Sigmoid colon (tissue), 7 donors: ENCODE measurements at regions of chr14 and their contacts with region 1.

Region 1: DNA sequence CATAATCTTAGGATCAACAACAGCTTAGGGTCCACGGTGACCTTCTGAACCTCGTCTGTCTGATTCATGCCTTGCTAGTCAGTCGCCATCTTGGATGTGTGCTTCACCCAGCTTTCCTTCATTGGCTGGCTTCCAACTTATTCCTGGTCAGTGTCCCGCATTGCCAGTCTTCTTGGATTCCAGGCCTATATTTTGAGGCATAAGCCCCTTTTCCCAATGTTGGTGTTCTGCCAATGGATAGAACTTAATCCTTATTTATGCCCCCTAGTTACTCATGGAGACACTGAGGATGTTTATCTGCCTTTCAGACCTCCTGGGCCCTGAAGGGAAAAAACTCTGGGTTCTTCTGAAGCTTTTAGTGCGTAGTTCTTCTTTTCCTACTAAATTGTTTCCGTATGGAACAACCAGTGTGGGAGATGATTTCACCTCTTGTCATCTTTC is 5.8 kb downstream of the JDP2 start:
- DNase-seq: no peak
- H3K4me3 ChIP-seq: no peak overlapping the region
- H3K27ac ChIP-seq: peak overlapping the region in 3 of 4 donors; percentile 16 to 68 (median 53)
- H3K4me1 ChIP-seq: peaks cover 0 to 95% (median 78%) of the 10 kb centered on the region in 4 donors
- H3K27me3 ChIP-seq: no peaks in the 10 kb centered on the region
- CTCF ChIP-seq: no peak
- EP300 ChIP-seq: no peak
- POLR2A ChIP-seq: no peak

Region 2: GRCh38 chr14:75389679-75390078 is 44.0 kb before region 1 on chr14:
- intact Hi-C with region 1: no loop called
- DNase-seq: no peak
- H3K4me3 ChIP-seq: no peak overlapping the region
- H3K27ac ChIP-seq: no peak overlapping the region
- H3K4me1 ChIP-seq: no peaks in the 10 kb centered on the region
- H3K27me3 ChIP-seq: no peaks in the 10 kb centered on the region
- CTCF ChIP-seq: no peak
- EP300 ChIP-seq: no peak
- POLR2A ChIP-seq: no peak

Region 3: DNA sequence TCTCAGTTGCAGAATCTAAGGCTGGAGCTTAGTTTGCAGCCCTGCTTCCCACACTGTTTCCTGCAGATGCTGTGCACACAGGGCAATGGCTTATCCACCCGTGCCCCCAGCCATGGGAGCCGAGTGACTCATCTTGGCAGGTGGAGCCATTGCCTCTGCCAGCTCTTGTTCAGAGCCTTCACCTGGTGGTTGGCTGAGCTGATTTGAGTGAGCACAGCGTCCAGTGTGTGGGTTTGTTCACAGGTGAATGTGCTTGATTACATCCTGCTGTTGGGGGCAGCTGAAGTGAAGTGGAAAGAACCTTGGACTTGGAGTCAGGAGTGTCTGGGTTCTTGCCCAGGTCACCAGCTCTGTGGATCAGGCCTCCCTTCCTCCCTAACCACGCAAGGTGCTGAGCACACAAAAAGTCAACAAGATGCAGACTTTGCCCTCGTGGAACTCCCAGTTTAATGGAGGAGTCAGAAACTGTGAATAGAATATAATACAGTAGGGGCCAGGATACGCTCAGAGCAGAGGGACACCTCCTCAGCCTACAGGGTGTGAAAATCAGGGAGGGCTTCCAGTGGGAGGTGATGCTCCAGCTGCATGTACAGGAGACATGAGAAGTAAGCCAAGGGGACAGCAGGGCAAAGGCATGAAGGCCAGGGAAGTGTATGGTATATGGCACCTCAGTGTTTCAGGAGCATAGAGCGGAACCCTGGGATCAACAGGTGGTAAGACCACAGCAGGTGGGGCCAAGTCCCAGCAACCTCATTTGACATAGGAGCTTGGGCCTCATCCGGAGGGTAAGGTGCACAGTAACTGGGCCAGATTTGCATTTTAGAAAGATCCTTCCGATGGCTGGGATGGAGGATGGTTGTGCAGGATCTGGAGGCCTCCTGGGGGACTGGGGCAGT is 17.0 kb after region 1 on chr14:
- intact Hi-C with region 1: loop called (anchors 2 kb)
- DNase-seq: peak; percentile 84
- H3K4me3 ChIP-seq: no peak overlapping the region
- H3K27ac ChIP-seq: peak overlapping the region; percentile 72 to 86 (median 80)
- H3K4me1 ChIP-seq: peaks cover 0 to 76% (median 69%) of the 10 kb centered on the region in 4 donors
- H3K27me3 ChIP-seq: no peaks in the 10 kb centered on the region
- CTCF ChIP-seq: no peak
- EP300 ChIP-seq: no peak
- POLR2A ChIP-seq: no peak

Region 4: GRCh38 chr14:76045773-76046172 is 612.1 kb after region 1 on chr14:
- intact Hi-C with region 1: no loop called
- DNase-seq: no peak
- H3K4me3 ChIP-seq: no peak overlapping the region
- H3K27ac ChIP-seq: no peak overlapping the region
- H3K4me1 ChIP-seq: no peaks in the 10 kb centered on the region
- H3K27me3 ChIP-seq: no peaks in the 10 kb centered on the region
- CTCF ChIP-seq: no peak
- EP300 ChIP-seq: no peak
- POLR2A ChIP-seq: no peak